Heart right ventricle (tissue), 16 donors: ENCODE measurements at regions of chr12 and their contacts with region 1.

Region 1: GRCh38 chr12:53005986-53006809 is at the start of gene EIF4B:
- DNase-seq: peak; percentile 100
- ATAC-seq: peak; percentile 96 to 98 (median 97)
- H3K4me3 ChIP-seq: peak within 1 kb of the TSS; percentile 66 to 98 (median 91)
- H3K27ac ChIP-seq: peak within 1 kb of the TSS; percentile 67 to 96 (median 90)
- H3K4me1 ChIP-seq: peaks cover 8 to 58% (median 52%) of the 10 kb centered on the region in 9 donors
- H3K27me3 ChIP-seq: peaks cover 0 to 1% (median 0%) of the 10 kb centered on the region in 7 donors
- CTCF ChIP-seq: no peak
- total RNA-seq, gene EIF4B: 364 to 477 (median 431) TPM

Region 2: GRCh38 chr12:53047221-53048042 is 41.2 kb after region 1 on chr12:
- intact Hi-C with region 1: loop called in 2 of 10 experiments (anchors 5 kb)
- DNase-seq: peak; percentile 83 to 85
- ATAC-seq: peak in 7 of 8 donors; percentile 14 to 26 (median 18)
- H3K4me3 ChIP-seq: peak overlapping the region; percentile 24 to 92 (median 78)
- H3K27ac ChIP-seq: peak overlapping the region; percentile 96 to 100 (median 100)
- H3K4me1 ChIP-seq: peaks cover 33 to 91% (median 75%) of the 10 kb centered on the region in 9 donors
- H3K27me3 ChIP-seq: peaks cover 0 to 5% (median 0%) of the 10 kb centered on the region in 7 donors
- CTCF ChIP-seq: peak in 4 of 9 donors; percentile 12 to 46 (median 37)